Activated CD8-positive, alpha-beta T cell treated with anti-CD3 and anti-CD28 coated beads, Interleukin-2, amount 10 ng/mL, durations not matched to agents 7 days and 5 days (primary cell): ENCODE measurements at regions of chr7 and their contacts with region 1.

Region 1: GRCh38 chr7:138008547-138009349 is 6.9 kb upstream of the CREB3L2 start:
- DNase-seq: peak; percentile 44
- ATAC-seq: peak; percentile 53
- H3K4me3 Mint-ChIP-seq: no peak overlapping the region
- H3K27ac Mint-ChIP-seq: no peak overlapping the region
- H3K4me1 Mint-ChIP-seq: peaks cover 12% of the 10 kb centered on the region
- H3K27me3 Mint-ChIP-seq: peaks cover 8% of the 10 kb centered on the region

Region 2: DNA sequence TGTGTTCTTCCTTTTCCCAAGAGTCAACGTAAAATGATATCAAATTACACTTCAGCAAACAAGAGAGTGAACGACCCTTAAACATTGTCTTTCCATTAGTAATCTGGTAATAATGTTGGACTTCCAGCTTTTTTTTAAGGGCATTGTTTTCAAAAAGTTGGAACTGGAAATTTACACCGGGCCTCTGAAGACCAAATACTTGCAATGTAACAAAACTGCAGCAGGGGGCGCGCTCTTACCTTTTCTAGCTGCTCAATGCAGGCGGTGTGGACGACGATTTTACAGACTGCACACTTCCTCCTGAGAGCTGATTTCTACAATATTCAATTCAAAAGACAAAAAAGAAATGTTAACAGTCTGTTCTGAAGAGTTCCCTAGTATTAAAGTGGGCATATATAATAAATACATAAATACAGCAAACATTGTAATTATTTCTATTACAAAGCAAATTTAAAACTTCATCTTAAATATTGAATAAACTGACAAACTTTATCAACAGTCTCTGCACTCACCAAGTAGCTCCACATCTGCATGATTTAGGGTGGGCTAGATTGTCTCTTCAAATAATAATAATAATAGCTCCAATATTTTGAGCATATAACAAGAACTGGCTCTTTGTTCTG is 352.4 kb before region 1 on chr7:
- CTCF ChIA-PET with region 1: interaction called, 21 read pairs
- POLR2A ChIA-PET with region 1: no interaction called
- DNase-seq: peak; percentile 77
- ATAC-seq: peak; percentile 63
- H3K4me3 Mint-ChIP-seq: no peak overlapping the region
- H3K27ac Mint-ChIP-seq: no peak overlapping the region
- H3K4me1 Mint-ChIP-seq: no peaks in the 10 kb centered on the region
- H3K27me3 Mint-ChIP-seq: peaks cover 7% of the 10 kb centered on the region

Region 3: DNA sequence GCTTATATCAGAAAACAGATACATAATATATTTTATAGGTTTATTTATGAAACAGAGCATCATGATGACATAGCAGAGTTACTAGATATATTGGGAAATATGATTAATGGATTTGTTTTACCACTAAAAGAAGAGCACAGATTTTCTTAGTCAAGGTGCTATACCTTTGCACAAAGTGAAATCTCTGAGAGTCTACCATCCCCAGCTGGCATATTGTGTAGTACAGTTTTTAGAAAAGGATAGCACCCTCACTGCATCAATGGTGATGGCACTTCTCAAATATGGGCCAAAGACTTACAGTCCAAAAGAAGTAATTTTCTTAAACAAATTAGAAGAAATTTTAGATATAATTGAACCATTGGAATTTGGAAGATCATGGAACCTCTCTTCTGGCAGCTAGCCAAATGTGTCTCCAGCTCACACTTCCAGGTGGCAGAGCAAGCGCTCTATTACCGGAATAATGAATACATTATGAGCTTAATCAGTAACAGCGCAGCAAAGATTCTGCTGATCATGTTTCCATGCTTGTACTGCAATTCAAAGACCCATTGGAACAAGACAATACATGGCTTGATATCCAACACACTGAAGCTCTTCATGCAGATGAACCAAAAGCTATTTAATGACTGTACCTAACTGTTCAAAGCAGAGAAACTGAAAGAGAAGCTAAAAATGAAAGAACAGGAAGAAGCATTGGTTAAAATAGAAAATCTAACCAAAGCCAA is 15.0 kb after region 1 on chr7:
- CTCF ChIA-PET with region 1: interaction called, 31 read pairs
- POLR2A ChIA-PET with region 1: no interaction called
- DNase-seq: no peak
- ATAC-seq: peak; percentile 68
- H3K4me3 Mint-ChIP-seq: no peak overlapping the region
- H3K27ac Mint-ChIP-seq: peak overlapping the region; percentile 81
- H3K4me1 Mint-ChIP-seq: peaks cover 16% of the 10 kb centered on the region
- H3K27me3 Mint-ChIP-seq: no peaks in the 10 kb centered on the region

Region 4: DNA sequence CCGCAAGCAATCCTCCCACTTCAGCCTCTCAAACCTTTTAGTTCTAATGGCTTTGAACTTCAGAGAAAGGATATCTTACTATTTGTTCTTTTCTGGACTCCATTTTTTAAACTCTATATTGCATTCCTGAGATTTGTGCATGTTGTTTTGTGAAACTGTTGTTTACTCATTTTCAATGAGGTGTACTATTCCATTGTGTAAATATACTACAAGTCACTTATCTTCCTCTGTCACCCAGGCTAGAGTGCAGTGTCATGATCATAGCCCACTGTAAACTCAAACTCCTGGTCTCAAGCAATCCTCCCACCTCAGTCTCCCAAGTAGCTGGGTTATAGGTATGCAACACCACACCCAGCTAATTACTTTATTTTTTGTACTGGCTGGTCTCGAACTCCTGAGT is 36.1 kb after region 1 on chr7:
- CTCF ChIA-PET with region 1: no interaction called
- POLR2A ChIA-PET with region 1: no interaction called
- DNase-seq: no peak
- ATAC-seq: no peak
- H3K4me3 Mint-ChIP-seq: no peak overlapping the region
- H3K27ac Mint-ChIP-seq: no peak overlapping the region
- H3K4me1 Mint-ChIP-seq: no peaks in the 10 kb centered on the region
- H3K27me3 Mint-ChIP-seq: peaks cover 13% of the 10 kb centered on the region